IMR-90 (cell line): ENCODE measurements at regions of chr3 and their contacts with region 1.

Region 1: DNA sequence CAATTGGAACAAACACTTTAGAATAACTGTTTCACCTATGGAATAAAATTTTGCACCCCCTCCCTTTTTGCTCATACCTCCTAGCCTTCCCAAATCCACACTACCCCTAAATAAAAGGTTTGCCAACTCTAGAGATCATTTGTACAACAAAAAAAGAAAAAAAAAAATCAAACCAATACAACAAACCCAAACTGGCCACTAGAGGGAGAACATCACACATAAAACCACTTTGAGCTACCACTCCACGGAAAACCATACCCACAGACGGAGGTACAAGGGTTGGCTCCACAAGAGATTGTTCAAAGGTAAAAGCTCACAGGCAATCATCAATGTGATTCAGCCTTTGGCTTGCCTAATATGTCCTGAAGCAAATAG is 47.6 kb downstream of the SETMAR start:
- DNase-seq: peak; percentile 69
- ATAC-seq: peak; percentile 86
- H3K4me3 ChIP-seq: no peak overlapping the region
- H3K27ac ChIP-seq: no peak overlapping the region
- H3K4me1 ChIP-seq: no peaks in the 10 kb centered on the region
- H3K27me3 ChIP-seq: no peaks in the 10 kb centered on the region
- CTCF ChIP-seq: peak; percentile 80
- POLR2A ChIP-seq: no peak
- RAD21 ChIP-seq: peak; percentile 81

Region 2: DNA sequence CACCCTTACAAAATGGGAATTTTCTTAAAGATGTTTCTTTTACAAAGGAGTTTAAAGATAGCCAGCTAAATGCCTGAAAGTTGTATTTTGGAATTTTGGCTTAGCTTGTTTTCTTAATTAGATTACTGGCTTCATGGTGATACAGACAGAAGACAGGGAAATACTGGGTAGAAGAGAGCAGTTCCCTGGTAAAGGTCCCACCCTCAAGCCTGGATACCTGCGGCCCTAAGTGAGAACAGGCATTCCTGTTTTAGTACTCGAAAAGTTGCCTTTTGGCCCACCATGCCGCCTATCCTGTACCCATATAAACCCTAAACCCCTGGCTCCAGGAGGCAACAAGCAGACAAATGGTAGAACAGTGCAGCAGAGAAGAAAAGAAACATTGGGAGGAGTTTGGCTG is 18.2 kb before region 1 on chr3:
- CTCF ChIA-PET with region 1: interaction called, 10 read pairs
- POLR2A ChIA-PET with region 1: no interaction called
- dilution Hi-C with region 1: no loop called
- in situ Hi-C with region 1: no loop called
- intact Hi-C with region 1: no loop called
- DNase-seq: no peak
- ATAC-seq: no peak
- H3K4me3 ChIP-seq: no peak overlapping the region
- H3K27ac ChIP-seq: no peak overlapping the region
- H3K4me1 ChIP-seq: peaks cover 2% of the 10 kb centered on the region; the same call in 1 of the 2 replicates
- H3K27me3 ChIP-seq: no peaks in the 10 kb centered on the region
- CTCF ChIP-seq: no peak
- POLR2A ChIP-seq: no peak
- RAD21 ChIP-seq: no peak

Region 3: GRCh38 chr3:4340411-4341335 is 10.1 kb before region 1 on chr3:
- CTCF ChIA-PET with region 1: interaction called, 12 read pairs
- POLR2A ChIA-PET with region 1: no interaction called
- dilution Hi-C with region 1: no loop called
- in situ Hi-C with region 1: no loop called
- intact Hi-C with region 1: no loop called
- DNase-seq: no peak
- ATAC-seq: no peak
- H3K4me3 ChIP-seq: no peak overlapping the region
- H3K27ac ChIP-seq: no peak overlapping the region; the same call in 1 of the 2 replicates
- H3K4me1 ChIP-seq: peaks cover 10% of the 10 kb centered on the region
- H3K27me3 ChIP-seq: no peaks in the 10 kb centered on the region
- CTCF ChIP-seq: no peak
- POLR2A ChIP-seq: no peak
- RAD21 ChIP-seq: no peak

Region 4: GRCh38 chr3:4493014-4493940 is 142.5 kb after region 1 on chr3 and contains the start of gene ITPR1:
- CTCF ChIA-PET with region 1: interaction called, 6 read pairs
- POLR2A ChIA-PET with region 1: no interaction called
- dilution Hi-C with region 1: no loop called
- in situ Hi-C with region 1: no loop called
- intact Hi-C with region 1: loop called (anchors 1 kb)
- DNase-seq: peak; percentile 98
- ATAC-seq: peak; percentile 96
- H3K4me3 ChIP-seq: peak within 1 kb of the TSS; percentile 62
- H3K27ac ChIP-seq: peak within 1 kb of the TSS; percentile 67
- H3K4me1 ChIP-seq: no peaks in the 10 kb centered on the region; the same call in 1 of the 2 replicates
- H3K27me3 ChIP-seq: no peaks in the 10 kb centered on the region
- CTCF ChIP-seq: no peak
- POLR2A ChIP-seq: peak; percentile 99
- RAD21 ChIP-seq: no peak
- total RNA-seq, gene ITPR1: 5.7 and 5.8 TPM in 2 replicates

Region 5: GRCh38 chr3:4584456-4585249 is 233.9 kb after region 1 on chr3:
- CTCF ChIA-PET with region 1: interaction called, 3 read pairs
- POLR2A ChIA-PET with region 1: no interaction called
- dilution Hi-C with region 1: no loop called
- in situ Hi-C with region 1: no loop called
- intact Hi-C with region 1: loop called (anchors 1 kb)
- DNase-seq: peak; percentile 16
- ATAC-seq: no peak
- H3K4me3 ChIP-seq: peak overlapping the region; percentile 45
- H3K27ac ChIP-seq: peak overlapping the region; percentile 84; the same call in 1 of the 2 replicates
- H3K4me1 ChIP-seq: peaks cover 15% of the 10 kb centered on the region
- H3K27me3 ChIP-seq: no peaks in the 10 kb centered on the region
- CTCF ChIP-seq: 0 out of 2 replicates have a peak, but pooled peaks have one; percentile 15
- POLR2A ChIP-seq: no peak
- RAD21 ChIP-seq: peak; percentile 23

Region 6: DNA sequence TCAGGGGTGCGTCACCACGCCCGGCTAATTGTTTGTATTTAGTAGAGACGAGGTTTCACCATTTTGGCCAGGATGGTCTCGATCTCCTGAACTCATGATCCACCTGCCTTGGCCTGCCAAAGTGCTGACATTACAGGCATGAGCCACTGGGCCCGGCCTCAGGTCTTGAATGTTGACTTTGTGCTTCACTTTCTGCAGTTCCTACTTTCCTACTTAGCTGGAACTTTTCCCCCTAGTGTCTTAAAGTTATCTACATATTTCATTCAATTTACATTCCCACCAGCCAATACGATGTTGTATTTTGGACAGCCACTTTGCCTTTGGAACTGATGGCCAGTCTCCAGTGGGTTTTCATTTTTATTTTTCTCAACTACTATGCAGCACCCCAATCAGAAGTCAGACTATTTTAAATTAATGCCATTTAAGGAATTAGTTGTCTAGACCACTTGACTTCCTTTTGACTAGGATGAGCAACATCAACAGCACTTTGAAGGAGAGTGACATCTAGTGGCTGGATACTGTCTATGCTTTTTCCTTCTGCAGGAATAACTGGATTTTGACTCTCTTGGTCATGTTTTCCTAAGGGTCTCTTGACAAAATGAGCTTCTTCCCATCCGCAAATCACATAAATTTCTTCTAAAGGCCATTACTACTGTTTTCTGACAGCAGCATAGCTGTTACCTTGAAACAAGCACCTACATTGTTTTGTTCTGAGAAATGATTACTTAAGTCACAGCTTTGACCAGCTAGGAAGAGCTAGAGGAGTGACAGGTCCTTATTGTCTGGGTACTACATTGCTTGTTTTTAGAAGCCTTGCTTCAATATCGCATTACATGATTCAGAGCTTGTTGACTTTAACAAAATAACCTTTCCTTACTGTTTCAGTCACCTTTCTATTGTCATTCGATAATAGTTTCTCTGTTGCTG is 282.6 kb after region 1 on chr3:
- CTCF ChIA-PET with region 1: interaction called, 19 read pairs
- POLR2A ChIA-PET with region 1: no interaction called
- dilution Hi-C with region 1: no loop called
- in situ Hi-C with region 1: loop called (anchors 5 kb)
- intact Hi-C with region 1: loop called (anchors 1 kb)
- DNase-seq: peak; percentile 72
- ATAC-seq: peak; percentile 92
- H3K4me3 ChIP-seq: no peak overlapping the region
- H3K27ac ChIP-seq: no peak overlapping the region
- H3K4me1 ChIP-seq: no peaks in the 10 kb centered on the region
- H3K27me3 ChIP-seq: no peaks in the 10 kb centered on the region
- CTCF ChIP-seq: peak; percentile 87
- POLR2A ChIP-seq: no peak
- RAD21 ChIP-seq: peak; percentile 85

Region 7: DNA sequence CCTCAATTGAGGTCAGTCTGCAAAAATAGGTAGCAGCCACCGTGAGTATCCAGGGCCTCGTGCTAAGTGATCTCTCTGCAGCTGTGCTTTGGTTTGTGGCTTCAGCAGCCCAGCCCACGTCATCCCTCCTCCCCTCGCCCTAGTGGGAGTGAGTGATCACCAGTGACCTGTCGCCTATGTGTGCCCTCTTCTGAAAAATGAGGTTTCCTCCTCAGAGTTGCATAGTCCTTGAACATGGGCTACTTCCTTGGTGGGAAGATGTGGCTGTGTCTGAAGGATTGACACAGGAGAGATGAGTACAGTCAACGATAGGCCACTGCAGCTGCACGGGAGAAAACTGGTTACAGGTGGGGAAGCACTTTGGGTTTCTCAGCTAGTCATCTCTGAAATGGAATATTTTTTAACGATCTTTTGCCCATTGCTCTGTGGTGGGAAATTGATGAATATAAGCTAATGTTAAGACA is 483.7 kb after region 1 on chr3:
- CTCF ChIA-PET with region 1: no interaction called
- POLR2A ChIA-PET with region 1: no interaction called
- dilution Hi-C with region 1: no loop called
- in situ Hi-C with region 1: no loop called
- intact Hi-C with region 1: no loop called
- DNase-seq: peak; percentile 17
- ATAC-seq: no peak
- H3K4me3 ChIP-seq: no peak overlapping the region
- H3K27ac ChIP-seq: no peak overlapping the region
- H3K4me1 ChIP-seq: peaks cover 6% of the 10 kb centered on the region
- H3K27me3 ChIP-seq: no peaks in the 10 kb centered on the region
- CTCF ChIP-seq: no peak
- POLR2A ChIP-seq: no peak
- RAD21 ChIP-seq: no peak

Region 8: DNA sequence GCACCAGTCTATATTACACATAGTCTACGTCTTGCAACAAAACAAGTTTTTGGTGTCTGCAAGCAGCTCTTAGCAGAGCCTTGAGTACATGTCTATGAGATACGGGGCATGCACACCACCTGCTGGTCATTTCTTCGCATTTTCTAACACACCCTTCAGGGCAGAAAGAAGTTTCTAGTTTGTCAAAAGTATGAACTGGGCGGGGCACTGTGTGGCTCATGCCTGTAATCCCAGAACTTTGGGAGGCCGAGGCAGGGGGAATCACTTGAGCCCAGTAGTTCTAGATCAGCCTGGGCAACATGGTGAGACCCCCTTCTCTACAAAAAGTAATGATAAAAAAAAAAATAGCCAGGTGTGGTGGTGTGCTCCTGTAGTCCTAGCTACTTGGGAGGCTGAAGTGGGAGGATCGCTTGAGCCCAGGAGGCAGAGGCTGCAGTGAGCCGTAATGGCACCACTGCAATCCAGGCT is 707.1 kb after region 1 on chr3:
- CTCF ChIA-PET with region 1: interaction called, 3 read pairs
- POLR2A ChIA-PET with region 1: no interaction called
- dilution Hi-C with region 1: no loop called
- in situ Hi-C with region 1: no loop called
- intact Hi-C with region 1: loop called (anchors 10 kb)
- DNase-seq: peak; percentile 85
- ATAC-seq: peak; percentile 83
- H3K4me3 ChIP-seq: no peak overlapping the region
- H3K27ac ChIP-seq: no peak overlapping the region
- H3K4me1 ChIP-seq: peaks cover 6% of the 10 kb centered on the region
- H3K27me3 ChIP-seq: peaks cover 3% of the 10 kb centered on the region; the same call in 1 of the 2 replicates
- CTCF ChIP-seq: peak; percentile 80
- POLR2A ChIP-seq: no peak
- RAD21 ChIP-seq: peak; percentile 90